ENCODE measurements at regions of chr13 and their contacts with region 1.

Region 1: GRCh38 chr13:27257648-27258253 is 6.4 kb downstream of the RPL21 start:
- DNase-seq: no peak
- H3K4me3 ChIP-seq: no peak overlapping the region
- H3K27me3 ChIP-seq: no peaks in the 10 kb centered on the region
- CTCF ChIP-seq: no peak

Region 2: GRCh38 chr13:27203854-27204253 is 53.9 kb before region 1 on chr13:
- CTCF ChIA-PET with region 1: no interaction called
- POLR2A ChIA-PET with region 1: no interaction called
- DNase-seq: no peak
- H3K4me3 ChIP-seq: no peak overlapping the region
- H3K27me3 ChIP-seq: no peaks in the 10 kb centered on the region; the same call in 1 of the 2 replicates
- CTCF ChIP-seq: peak; percentile 29

Region 3: DNA sequence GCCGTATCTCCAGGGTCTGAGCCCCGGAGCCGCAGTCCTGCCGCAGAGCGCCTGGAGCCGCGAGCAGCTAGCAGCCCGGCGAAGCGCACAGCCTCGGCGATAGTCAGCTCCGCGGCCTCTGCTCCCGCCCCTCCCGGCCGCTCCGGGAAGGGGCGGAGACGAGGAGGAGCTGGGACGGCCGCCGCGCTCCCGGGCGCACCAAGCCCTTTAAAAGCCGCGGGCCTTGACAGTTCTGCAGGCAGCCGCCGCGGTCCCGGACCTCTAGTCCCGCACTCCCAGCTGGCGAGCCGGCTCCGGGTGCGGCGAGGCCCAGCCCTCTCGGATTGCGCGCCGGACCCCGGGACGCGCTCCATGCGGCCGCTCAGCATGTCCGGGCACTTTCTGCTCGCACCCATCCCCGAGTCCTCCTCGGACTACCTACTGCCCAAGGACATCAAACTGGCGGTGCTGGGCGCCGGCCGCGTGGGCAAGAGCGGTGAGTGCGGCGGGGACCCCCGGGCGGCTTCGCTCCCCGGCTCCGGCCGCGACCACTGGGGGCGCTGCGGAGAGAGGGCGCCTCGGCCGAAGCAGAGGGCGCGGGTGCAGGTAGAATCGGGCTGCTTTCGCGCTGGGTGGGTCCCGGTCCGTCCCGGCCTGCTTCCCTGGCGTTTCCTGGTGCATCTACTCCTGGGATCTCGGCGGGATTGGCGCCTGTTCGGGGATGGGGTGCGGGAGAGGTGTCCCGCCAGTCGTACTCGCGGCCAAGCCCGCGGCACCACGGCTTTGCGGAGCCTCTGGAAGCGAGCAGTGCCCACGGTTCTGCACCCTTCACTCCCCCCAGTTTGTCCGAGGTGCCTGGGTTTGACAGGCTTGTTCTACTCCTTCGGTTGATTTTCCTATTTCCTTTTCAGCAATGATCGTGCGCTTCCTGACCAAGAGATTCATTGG is 13.1 kb after region 1 on chr13 and contains the start of gene RASL11A:
- CTCF ChIA-PET with region 1: interaction called, 15 read pairs
- POLR2A ChIA-PET with region 1: interaction called, 4 read pairs
- DNase-seq: no peak
- H3K4me3 ChIP-seq: peak within 1 kb of the TSS; percentile 82
- H3K27me3 ChIP-seq: no peaks in the 10 kb centered on the region
- CTCF ChIP-seq: peak; percentile 67
- polyA plus RNA-seq, gene RASL11A: 37.6 and 67.0 TPM in 2 replicates

Region 4: DNA sequence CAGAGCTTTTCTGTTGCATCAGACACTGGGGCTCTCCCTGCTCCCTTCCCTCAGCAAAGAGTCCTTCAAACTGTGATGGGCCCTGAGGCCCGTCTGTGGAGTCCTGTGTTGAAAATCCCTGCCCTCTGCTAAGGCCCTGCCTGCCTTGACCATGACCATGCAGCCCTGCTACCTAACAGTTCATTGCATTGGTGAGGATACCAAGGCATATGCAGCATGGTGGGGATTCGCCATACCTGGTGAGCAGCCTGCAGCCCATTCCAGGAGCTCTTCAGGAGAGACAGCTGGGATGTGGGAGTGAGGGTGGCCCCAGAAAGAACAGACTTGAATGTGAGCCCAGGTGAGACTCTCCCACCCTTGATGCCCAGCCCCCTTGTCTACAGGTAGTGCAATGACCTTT is 463.9 kb after region 1 on chr13:
- CTCF ChIA-PET with region 1: no interaction called
- POLR2A ChIA-PET with region 1: no interaction called
- DNase-seq: no peak
- H3K4me3 ChIP-seq: no peak overlapping the region
- H3K27me3 ChIP-seq: peaks cover 3% of the 10 kb centered on the region
- CTCF ChIP-seq: no peak

Measured in BJ (cell line).